PC-9 (cell line): ENCODE measurements at regions of chr1 and their contacts with region 1.

Region 1: GRCh38 chr1:27542408-27543273 is 52.7 kb upstream of the WASF2 start:
- DNase-seq: peak; percentile 89 to 98
- H3K4me3 ChIP-seq: no peak overlapping the region; the same call in 1 of the 2 replicates
- H3K27ac ChIP-seq: peak overlapping the region; percentile 100
- H3K4me1 ChIP-seq: peaks cover 70% of the 10 kb centered on the region
- H3K27me3 ChIP-seq: no peaks in the 10 kb centered on the region
- CTCF ChIP-seq: no peak

Region 2: DNA sequence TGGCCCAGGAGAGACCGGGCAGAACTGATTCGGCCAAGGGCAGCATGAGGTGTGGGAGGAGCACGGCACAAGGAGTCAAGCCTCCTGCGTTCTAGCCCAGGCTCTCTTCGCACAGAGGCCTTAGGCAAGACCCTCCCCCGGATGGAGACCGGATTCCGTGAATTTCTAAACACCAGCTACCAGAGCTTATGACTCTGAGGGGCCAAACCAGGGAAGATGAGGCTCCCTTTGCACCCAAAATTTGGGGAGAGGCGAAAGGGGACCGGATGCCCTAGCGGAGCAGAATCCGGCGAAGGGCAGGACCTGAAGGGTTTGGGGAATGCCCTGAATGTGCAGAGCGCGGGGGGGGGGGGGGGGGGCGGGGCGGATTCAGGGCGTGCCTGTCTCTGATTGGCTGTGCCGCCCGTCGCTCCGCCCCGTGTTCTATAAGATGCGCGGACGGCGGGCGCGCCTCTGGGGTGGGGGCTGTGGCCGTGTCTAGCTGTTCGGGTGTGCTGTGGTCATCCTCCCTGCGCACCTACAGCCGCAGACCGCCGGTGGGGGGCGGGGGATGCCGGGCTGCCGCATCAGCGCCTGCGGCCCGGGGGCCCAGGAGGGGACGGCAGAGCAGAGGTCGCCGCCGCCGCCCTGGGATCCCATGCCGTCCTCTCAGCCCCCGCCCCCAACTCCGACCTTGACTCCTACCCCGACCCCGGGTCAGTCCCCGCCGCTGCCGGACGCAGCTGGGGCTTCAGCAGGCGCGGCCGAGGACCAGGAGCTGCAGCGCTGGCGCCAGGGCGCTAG is 549.2 kb before region 1 on chr1 and contains the start of gene TRNP1:
- CTCF ChIA-PET with region 1: interaction called, 15 read pairs
- POLR2A ChIA-PET with region 1: no interaction called
- intact Hi-C with region 1: no loop called
- DNase-seq: peak; percentile 45 to 76
- H3K4me3 ChIP-seq: peak within 1 kb of the TSS; percentile 62
- H3K27ac ChIP-seq: no peak within 1 kb of the TSS
- H3K4me1 ChIP-seq: peaks cover 49% of the 10 kb centered on the region
- H3K27me3 ChIP-seq: no peaks in the 10 kb centered on the region
- CTCF ChIP-seq: no peak
- total RNA-seq, gene TRNP1: 7.4 and 7.9 TPM in 2 replicates

Region 3: GRCh38 chr1:27416387-27417111 is 126.1 kb before region 1 on chr1:
- CTCF ChIA-PET with region 1: interaction called, 4 read pairs
- POLR2A ChIA-PET with region 1: no interaction called
- intact Hi-C with region 1: loop called (anchors 5 kb)
- DNase-seq: peak; percentile 35 to 42
- H3K4me3 ChIP-seq: no peak overlapping the region
- H3K27ac ChIP-seq: no peak overlapping the region
- H3K4me1 ChIP-seq: no peaks in the 10 kb centered on the region
- H3K27me3 ChIP-seq: no peaks in the 10 kb centered on the region
- CTCF ChIP-seq: peak; percentile 74

Region 4: GRCh38 chr1:27489910-27490741 is 52.5 kb before region 1 on chr1 and contains the start of gene WASF2:
- CTCF ChIA-PET with region 1: no interaction called
- POLR2A ChIA-PET with region 1: interaction called, 3 read pairs
- intact Hi-C with region 1: loop called (anchors 1 kb)
- DNase-seq: peak; percentile 87 to 96
- H3K4me3 ChIP-seq: peak within 1 kb of the TSS; percentile 88
- H3K27ac ChIP-seq: peak within 1 kb of the TSS; percentile 94
- H3K4me1 ChIP-seq: peaks cover 11% of the 10 kb centered on the region
- H3K27me3 ChIP-seq: no peaks in the 10 kb centered on the region
- CTCF ChIP-seq: no peak
- total RNA-seq, gene WASF2: 96.5 and 134 TPM in 2 replicates

Region 5: GRCh38 chr1:27574871-27575831 is 32.5 kb after region 1 on chr1:
- CTCF ChIA-PET with region 1: no interaction called
- POLR2A ChIA-PET with region 1: no interaction called
- intact Hi-C with region 1: no loop called
- DNase-seq: no peak
- H3K4me3 ChIP-seq: no peak overlapping the region
- H3K27ac ChIP-seq: no peak overlapping the region
- H3K4me1 ChIP-seq: no peaks in the 10 kb centered on the region
- H3K27me3 ChIP-seq: no peaks in the 10 kb centered on the region
- CTCF ChIP-seq: no peak

Region 6: GRCh38 chr1:28835237-28835650 is 1292.6 kb after region 1 on chr1:
- CTCF ChIA-PET with region 1: no interaction called
- POLR2A ChIA-PET with region 1: interaction called, 27 read pairs
- intact Hi-C with region 1: no loop called
- DNase-seq: no peak
- H3K4me3 ChIP-seq: no peak overlapping the region
- H3K27ac ChIP-seq: no peak overlapping the region
- H3K4me1 ChIP-seq: no peaks in the 10 kb centered on the region
- H3K27me3 ChIP-seq: no peaks in the 10 kb centered on the region
- CTCF ChIP-seq: no peak